Activated CD4-positive, alpha-beta T cell treated with anti-CD3 and anti-CD28 coated beads, Interleukin-2, amount 10 ng/mL, durations not matched to agents 24 days and 14 days (primary cell): ENCODE measurements at regions of chr12 and their contacts with region 1.

Region 1: DNA sequence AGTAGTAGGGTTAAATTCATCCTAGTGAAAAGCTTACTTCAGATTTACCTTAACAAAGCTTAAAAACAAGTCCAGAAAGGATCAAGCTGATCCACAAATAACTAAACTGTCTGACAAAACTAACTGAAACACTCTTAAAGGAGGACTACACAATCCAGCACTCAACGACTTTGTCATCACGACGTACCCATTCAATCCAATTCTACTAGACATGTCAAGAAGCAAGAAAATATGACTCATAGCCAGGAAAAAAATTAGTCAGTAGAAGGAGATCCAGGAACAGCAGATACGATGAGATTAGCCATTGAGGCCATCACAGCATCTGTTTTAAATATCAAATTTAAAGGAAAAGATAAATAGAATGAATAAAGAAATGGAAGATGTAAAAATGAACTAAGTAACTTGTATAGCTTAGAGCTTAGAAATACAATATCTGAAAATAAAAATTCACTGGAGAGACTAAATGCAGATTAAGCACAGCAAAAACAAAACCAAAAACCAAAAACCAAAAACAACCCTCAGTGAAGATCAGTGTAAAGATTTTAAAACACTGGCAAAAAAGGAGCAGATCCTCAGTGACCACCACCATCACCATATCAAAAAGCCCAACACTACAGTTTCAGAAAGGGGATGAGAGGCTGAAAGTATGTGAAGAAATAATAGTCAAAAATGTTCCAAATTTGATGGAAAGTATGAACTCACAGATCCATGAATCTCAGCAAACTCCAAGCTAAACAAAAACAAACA is 95.0 kb upstream of the CCND2 start:
- DNase-seq: peak; percentile 67
- H3K4me3 Mint-ChIP-seq: peak overlapping the region; percentile 55
- H3K27ac Mint-ChIP-seq: peak overlapping the region; percentile 92
- H3K4me1 Mint-ChIP-seq: peaks cover 21% of the 10 kb centered on the region
- H3K27me3 Mint-ChIP-seq: no peaks in the 10 kb centered on the region

Region 2: GRCh38 chr12:4107436-4107878 is 71.1 kb before region 1 on chr12:
- intact Hi-C with region 1: loop called (anchors 1 kb)
- DNase-seq: peak; percentile 93
- H3K4me3 Mint-ChIP-seq: peak overlapping the region; percentile 47
- H3K27ac Mint-ChIP-seq: peak overlapping the region; percentile 83
- H3K4me1 Mint-ChIP-seq: peaks cover 42% of the 10 kb centered on the region
- H3K27me3 Mint-ChIP-seq: peaks cover 2% of the 10 kb centered on the region

Region 3: DNA sequence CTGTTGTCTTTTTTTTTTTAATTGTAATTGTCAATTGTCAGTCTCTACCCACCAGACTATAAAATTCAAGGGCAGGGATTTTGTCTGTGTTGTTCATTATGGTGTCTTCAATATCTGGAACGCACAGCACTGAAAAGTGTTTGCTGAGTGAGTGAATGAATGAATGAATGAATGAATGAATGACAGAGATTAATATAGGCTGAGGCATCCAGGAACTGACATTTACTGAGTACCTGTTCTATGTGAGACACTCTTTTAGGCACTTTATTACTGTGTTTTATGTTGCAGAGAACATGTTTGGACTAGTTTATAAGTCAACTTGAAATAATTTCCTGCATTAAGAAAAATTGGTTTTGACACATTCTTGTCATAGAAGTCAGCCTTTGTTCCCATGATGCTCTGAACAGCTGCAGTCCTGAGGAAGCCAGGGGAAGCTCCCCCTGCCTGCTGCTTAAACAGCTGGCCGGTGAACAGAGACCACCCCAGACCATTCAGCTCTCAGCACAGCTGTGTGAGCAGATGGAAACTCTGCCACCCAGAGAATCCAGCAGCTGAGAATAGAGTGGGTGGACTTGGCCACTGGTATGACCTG is 65.8 kb before region 1 on chr12:
- intact Hi-C with region 1: loop called (anchors 1 kb)
- DNase-seq: peak; percentile 48
- H3K4me3 Mint-ChIP-seq: no peak overlapping the region
- H3K27ac Mint-ChIP-seq: peak overlapping the region; percentile 9
- H3K4me1 Mint-ChIP-seq: peaks cover 57% of the 10 kb centered on the region
- H3K27me3 Mint-ChIP-seq: no peaks in the 10 kb centered on the region

Region 4: DNA sequence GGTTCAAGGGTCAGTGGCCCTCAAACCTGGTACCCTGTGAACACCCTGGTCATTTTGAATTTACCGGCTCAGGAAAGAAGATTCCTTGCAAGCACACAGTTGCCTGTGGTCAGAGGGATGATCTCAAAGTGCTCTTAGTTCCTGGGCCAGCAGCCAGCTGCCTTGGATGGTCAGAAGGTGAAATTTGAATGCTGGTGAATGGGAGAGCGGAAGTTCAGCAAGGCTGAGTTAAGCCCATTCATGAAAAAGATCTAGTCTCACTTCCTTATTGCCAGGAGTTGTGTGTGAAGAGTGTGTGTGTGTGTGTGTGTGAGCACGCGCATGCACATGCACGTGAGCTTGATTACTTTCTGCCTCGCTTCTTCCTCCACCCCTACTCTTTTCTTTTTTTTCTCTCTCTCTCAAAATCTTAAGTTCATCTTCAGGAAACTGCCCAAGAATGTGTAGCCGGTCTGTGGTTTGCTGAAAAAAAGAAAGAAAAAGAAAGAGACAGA is 60.5 kb before region 1 on chr12:
- intact Hi-C with region 1: loop called (anchors 1 kb)
- DNase-seq: no peak
- H3K4me3 Mint-ChIP-seq: peak overlapping the region; percentile 73
- H3K27ac Mint-ChIP-seq: peak overlapping the region; percentile 89
- H3K4me1 Mint-ChIP-seq: peaks cover 60% of the 10 kb centered on the region
- H3K27me3 Mint-ChIP-seq: no peaks in the 10 kb centered on the region

Region 5: GRCh38 chr12:4164559-4165558 is 13.7 kb before region 1 on chr12:
- intact Hi-C with region 1: loop called (anchors 2 kb)
- DNase-seq: peak; percentile 91
- H3K4me3 Mint-ChIP-seq: peak overlapping the region; percentile 84
- H3K27ac Mint-ChIP-seq: peak overlapping the region; percentile 95
- H3K4me1 Mint-ChIP-seq: peaks cover 49% of the 10 kb centered on the region
- H3K27me3 Mint-ChIP-seq: no peaks in the 10 kb centered on the region

Region 6: GRCh38 chr12:4215229-4216186 is 36.9 kb after region 1 on chr12:
- intact Hi-C with region 1: loop called (anchors 5 kb)
- DNase-seq: peak; percentile 81
- H3K4me3 Mint-ChIP-seq: peak overlapping the region; percentile 72
- H3K27ac Mint-ChIP-seq: peak overlapping the region; percentile 82
- H3K4me1 Mint-ChIP-seq: peaks cover 46% of the 10 kb centered on the region
- H3K27me3 Mint-ChIP-seq: peaks cover 2% of the 10 kb centered on the region

Region 7: DNA sequence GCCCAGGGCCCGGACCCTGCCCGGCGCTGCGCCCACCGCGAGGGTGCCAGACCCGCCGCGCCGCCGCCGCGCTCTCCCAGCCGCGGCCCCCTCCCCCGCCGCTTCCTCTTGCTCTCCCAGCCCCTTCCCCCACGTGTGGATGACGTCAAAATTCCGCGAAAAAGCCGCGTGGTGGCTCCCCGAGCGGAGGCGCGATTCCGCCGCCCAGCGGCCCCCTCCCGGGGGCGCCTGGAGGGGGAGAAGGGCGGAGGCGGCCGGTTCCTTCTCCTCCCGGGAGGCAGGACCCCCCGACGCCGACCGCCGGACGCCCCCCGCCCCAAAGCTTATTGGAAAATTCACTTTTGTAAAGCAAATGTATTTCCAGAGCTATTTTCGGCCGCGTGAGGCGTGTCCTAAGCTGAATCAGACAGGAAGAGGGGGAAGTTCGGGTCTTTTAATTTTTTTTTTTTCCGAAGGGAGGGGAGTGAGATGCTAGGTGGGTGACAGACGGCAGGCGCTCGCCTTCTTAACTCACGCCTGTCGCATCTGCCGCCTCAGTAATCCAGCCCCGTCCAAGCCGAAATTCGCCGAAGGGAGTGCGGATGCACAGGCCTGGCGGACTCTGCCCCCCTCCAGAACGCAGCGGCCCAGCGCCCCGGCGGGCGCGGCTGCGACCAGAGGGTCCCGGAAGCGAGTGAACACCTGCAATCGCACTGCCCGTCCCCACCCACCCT is 90.8 kb after region 1 on chr12:
- intact Hi-C with region 1: loop called (anchors 1 kb)
- DNase-seq: peak; percentile 98
- H3K4me3 Mint-ChIP-seq: peak overlapping the region; percentile 97
- H3K27ac Mint-ChIP-seq: peak overlapping the region; percentile 97
- H3K4me1 Mint-ChIP-seq: peaks cover 24% of the 10 kb centered on the region
- H3K27me3 Mint-ChIP-seq: peaks cover 16% of the 10 kb centered on the region